GM12878 (cell line): ENCODE measurements at regions of chr7 and their contacts with region 1.

Region 1: DNA sequence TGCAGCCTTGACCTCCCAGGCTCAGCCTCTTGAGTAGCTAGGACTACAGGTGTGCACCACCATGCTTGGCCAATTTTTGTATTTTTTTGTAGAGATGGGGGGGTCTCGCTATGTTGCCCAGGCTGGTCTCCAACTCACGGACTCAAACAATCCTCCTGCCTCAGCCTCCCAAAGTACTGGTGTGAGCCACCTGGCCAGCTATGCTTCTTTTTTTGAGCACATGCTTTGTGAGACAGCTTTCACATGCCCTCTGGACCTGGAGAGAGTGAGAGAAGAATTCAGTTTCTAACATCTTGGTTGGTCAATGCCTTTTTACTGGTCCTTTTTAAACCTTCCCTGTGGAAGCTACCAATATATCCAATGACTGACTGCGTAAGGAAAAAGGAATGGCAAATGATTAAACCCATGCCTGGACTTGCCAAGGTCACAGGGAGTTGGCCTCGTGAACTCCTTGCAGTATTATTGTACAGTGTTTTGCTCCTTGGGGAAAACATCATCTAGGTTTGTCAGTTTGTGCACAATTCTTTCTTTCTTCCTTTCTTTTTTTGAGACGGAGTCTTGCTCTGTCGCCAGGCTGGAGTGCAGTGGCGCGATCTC is 6.2 kb upstream of the FOXK1 start:
- DNase-seq: no peak
- ATAC-seq: no peak
- H3K4me3 ChIP-seq: no peak overlapping the region
- H3K27ac ChIP-seq: no peak overlapping the region
- H3K4me1 ChIP-seq: no peaks in the 10 kb centered on the region
- H3K27me3 ChIP-seq: no peaks in the 10 kb centered on the region
- CTCF ChIP-seq: no peak
- EP300 ChIP-seq: no peak
- POLR2A ChIP-seq: no peak
- RAD21 ChIP-seq: no peak

Region 2: DNA sequence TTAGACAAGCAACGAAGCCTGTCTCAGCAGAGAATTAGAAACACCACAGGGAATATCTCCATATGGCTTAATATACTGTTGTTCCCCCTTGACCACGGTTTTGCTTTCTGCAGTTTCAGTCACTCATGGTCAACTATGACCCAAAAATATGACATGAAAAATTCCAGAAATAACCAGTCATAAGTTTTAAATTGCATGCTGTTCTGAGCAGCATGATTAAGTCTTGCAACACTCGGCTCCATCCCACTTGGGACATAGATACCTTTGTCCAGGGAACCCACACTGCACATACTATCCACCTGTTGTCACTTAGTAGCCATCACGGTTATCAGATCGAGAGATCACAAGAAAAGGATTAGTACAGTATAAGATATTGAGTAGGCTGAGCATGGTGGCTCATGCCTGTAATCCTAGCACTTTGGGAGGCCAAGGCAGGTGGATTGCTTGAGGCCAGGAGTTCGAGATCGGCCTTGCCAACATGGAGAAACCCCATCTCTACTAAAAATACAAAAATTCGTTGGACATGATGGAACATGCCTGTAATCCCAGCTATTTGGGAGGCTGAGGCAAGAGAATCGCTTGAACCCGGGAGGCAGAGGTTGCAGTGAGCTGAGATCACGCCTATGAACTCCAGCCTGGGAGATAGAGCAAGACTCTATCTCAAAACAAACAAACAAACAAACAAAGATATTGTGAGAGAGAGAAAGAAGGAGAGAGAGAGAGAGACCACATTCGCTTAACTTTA is 54.3 kb before region 1 on chr7:
- CTCF ChIA-PET with region 1: no interaction called
- POLR2A ChIA-PET with region 1: no interaction called
- RAD21 ChIA-PET with region 1: no interaction called
- SMC1A ChIA-PET with region 1: no interaction called
- in situ Hi-C with region 1: no loop called
- intact Hi-C with region 1: no loop called
- DNase-seq: no peak
- ATAC-seq: no peak
- H3K4me3 ChIP-seq: no peak overlapping the region
- H3K27ac ChIP-seq: no peak overlapping the region
- H3K4me1 ChIP-seq: no peaks in the 10 kb centered on the region
- H3K27me3 ChIP-seq: no peaks in the 10 kb centered on the region
- CTCF ChIP-seq: no peak
- EP300 ChIP-seq: no peak
- POLR2A ChIP-seq: no peak
- RAD21 ChIP-seq: no peak

Region 3: DNA sequence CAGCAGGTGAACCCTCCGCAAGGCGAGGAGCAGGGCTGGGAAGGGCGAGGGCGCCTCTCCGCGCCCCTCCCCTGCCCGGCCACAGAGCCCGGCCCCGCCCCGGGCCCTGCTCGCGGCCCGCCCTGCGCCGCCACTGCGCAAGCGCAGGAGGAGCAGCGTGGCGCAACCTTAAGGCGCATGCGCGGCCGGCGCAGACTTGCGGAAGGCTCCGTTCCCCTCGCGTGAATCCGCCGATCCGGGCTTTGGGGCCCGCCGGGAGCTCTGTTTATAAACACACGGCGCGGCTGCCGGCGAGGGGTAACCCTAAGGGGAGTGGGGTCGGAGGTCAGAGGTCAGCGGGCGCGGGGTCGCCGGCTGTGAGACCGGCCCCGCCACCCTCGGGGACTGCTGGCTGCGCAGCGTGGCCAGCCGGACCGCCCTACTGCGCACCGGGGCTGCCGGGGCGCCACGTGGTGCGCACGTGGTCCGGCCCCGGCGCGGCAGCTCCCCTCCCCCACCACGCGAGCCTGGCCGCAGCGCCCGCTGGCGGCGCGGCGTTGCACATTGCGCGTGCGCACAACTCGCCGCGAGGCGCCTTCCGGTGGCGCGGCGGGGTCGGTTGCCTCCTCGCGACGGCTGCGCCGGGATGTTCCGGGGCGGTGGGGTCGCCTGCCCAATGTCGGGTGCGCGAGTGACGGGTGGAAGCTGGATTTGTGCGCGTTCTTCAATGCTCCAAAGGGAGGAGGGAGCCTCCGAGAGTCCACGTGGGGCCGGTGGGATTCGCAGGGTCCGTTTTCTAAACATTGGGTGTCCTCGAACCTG is 34.0 kb before region 1 on chr7:
- CTCF ChIA-PET with region 1: interaction called, 4 read pairs
- POLR2A ChIA-PET with region 1: no interaction called
- RAD21 ChIA-PET with region 1: no interaction called
- SMC1A ChIA-PET with region 1: no interaction called
- in situ Hi-C with region 1: loop called (anchors 5 kb)
- intact Hi-C with region 1: no loop called
- DNase-seq: peak; percentile 65
- ATAC-seq: peak; percentile 97
- H3K4me3 ChIP-seq: peak overlapping the region; percentile 90
- H3K27ac ChIP-seq: peak overlapping the region; percentile 80
- H3K4me1 ChIP-seq: 0 out of 2 replicates have a peak, but pooled peaks cover 3% of the 10 kb centered on the region
- H3K27me3 ChIP-seq: no peaks in the 10 kb centered on the region
- CTCF ChIP-seq: peak; percentile 21 to 70 (median 50); a peak in 4 of 6 replicates
- EP300 ChIP-seq: no peak
- POLR2A ChIP-seq: peak; percentile 96
- RAD21 ChIP-seq: no peak

Region 4: DNA sequence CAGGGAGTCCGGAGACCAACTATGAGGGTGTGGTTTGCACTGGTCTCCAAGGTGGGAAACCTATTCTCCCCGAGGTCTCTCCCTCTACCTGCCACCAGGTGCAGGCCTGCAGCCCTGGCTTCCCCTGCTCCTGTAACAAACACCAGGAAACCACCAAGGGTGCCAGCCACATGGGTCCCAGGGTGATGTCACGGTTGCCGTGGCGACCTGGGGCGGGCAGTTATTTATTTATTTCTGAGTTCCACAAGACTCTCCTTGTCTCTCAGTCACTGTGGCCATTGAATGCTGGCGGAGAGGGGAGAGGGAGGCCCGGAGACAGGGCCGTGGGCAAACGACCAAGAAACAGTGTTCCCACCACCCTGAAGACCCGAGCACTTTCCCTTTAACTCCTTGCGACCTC is 256.1 kb after region 1 on chr7:
- CTCF ChIA-PET with region 1: no interaction called
- POLR2A ChIA-PET with region 1: no interaction called
- RAD21 ChIA-PET with region 1: no interaction called
- SMC1A ChIA-PET with region 1: no interaction called
- in situ Hi-C with region 1: no loop called
- intact Hi-C with region 1: no loop called
- DNase-seq: no peak
- ATAC-seq: no peak
- H3K4me3 ChIP-seq: no peak overlapping the region
- H3K27ac ChIP-seq: no peak overlapping the region
- H3K4me1 ChIP-seq: no peaks in the 10 kb centered on the region
- H3K27me3 ChIP-seq: no peaks in the 10 kb centered on the region
- CTCF ChIP-seq: no peak
- EP300 ChIP-seq: no peak
- POLR2A ChIP-seq: no peak
- RAD21 ChIP-seq: no peak